ENCODE measurements at regions of chr5 and their contacts with region 1.

Region 1: GRCh38 chr5:96614110-96614691 is 48.0 kb upstream of the CAST start:
- DNase-seq: peak in 4 of 5 donors; percentile 31 to 75 (median 52)
- H3K4me3 ChIP-seq: no peak overlapping the region
- H3K27ac ChIP-seq: no peak overlapping the region
- H3K4me1 ChIP-seq: no peaks in the 10 kb centered on the region
- H3K27me3 ChIP-seq: no peaks in the 10 kb centered on the region
- CTCF ChIP-seq: peak; percentile 36 to 70 (median 70)
- EP300 ChIP-seq: no peak
- POLR2A ChIP-seq: no peak

Region 2: DNA sequence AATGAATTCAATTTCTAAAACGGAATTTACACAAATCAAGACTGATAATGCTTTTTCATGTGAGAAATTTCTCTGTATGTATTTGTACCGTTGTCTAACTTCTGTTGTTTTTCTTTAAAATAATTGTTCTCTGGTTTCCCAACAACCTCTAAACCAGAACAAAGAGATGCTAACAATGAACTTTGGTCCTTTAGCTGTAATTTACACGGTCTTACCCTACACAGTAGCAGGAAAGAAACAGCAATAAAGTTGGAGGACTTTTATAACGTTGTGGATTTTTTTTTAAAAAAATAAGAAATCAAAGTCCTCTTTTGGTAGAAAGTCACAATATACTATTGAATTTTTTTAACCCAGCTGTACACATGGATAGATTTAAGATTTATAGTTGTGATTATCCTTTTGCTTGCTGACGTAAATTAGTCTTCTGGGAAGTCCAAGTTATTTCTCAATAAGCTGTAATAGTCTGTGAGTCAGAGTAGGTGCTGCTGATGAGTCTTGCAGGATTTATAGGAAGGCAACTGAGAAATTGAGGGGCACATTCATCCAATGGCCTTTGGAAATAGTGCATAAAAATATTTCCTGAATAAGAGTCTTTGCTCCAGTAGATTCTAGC is 104.4 kb before region 1 on chr5:
- intact Hi-C with region 1: no loop called
- DNase-seq: no peak
- H3K4me3 ChIP-seq: no peak overlapping the region
- H3K27ac ChIP-seq: no peak overlapping the region
- H3K4me1 ChIP-seq: no peaks in the 10 kb centered on the region
- H3K27me3 ChIP-seq: no peaks in the 10 kb centered on the region
- CTCF ChIP-seq: no peak
- EP300 ChIP-seq: no peak
- POLR2A ChIP-seq: no peak

Region 3: GRCh38 chr5:96692441-96692840 is 78.2 kb after region 1 on chr5:
- intact Hi-C with region 1: loop called in 1 of 4 experiments (anchors 10 kb)
- DNase-seq: no peak
- H3K4me3 ChIP-seq: no peak overlapping the region
- H3K27ac ChIP-seq: no peak overlapping the region
- H3K4me1 ChIP-seq: no peaks in the 10 kb centered on the region
- H3K27me3 ChIP-seq: no peaks in the 10 kb centered on the region
- CTCF ChIP-seq: no peak
- EP300 ChIP-seq: no peak
- POLR2A ChIP-seq: no peak

Region 4: GRCh38 chr5:96743065-96743768 is 129.0 kb after region 1 on chr5:
- intact Hi-C with region 1: loop called in 1 of 4 experiments (anchors 10 kb)
- DNase-seq: no peak
- H3K4me3 ChIP-seq: no peak overlapping the region
- H3K27ac ChIP-seq: no peak overlapping the region
- H3K4me1 ChIP-seq: no peaks in the 10 kb centered on the region
- H3K27me3 ChIP-seq: no peaks in the 10 kb centered on the region
- CTCF ChIP-seq: no peak
- EP300 ChIP-seq: no peak
- POLR2A ChIP-seq: no peak